ENCODE measurements at regions of chr12 and their contacts with region 1.

Region 1: GRCh38 chr12:93127582-93128331 is 198.7 kb upstream of the EEA1 start:
- DNase-seq: peak; percentile 79
- ATAC-seq: peak; percentile 92 to 96

Region 2: GRCh38 chr12:93025145-93025805 is 102.5 kb before region 1 on chr12:
- intact Hi-C with region 1: loop called in 1 of 2 experiments (anchors 2 kb)
- DNase-seq: no peak
- ATAC-seq: peak in 1 of 2 donors; percentile 58

Region 3: GRCh38 chr12:93080994-93081797 is 46.6 kb before region 1 on chr12:
- intact Hi-C with region 1: no loop called
- DNase-seq: no peak
- ATAC-seq: peak in 1 of 2 donors; percentile 12

Region 4: GRCh38 chr12:93336291-93336741 is 208.6 kb after region 1 on chr12:
- intact Hi-C with region 1: no loop called
- DNase-seq: no peak
- ATAC-seq: peak; percentile 37 to 71

Region 5: GRCh38 chr12:93378373-93379325 is 250.9 kb after region 1 on chr12:
- intact Hi-C with region 1: loop called in 1 of 2 experiments (anchors 5 kb)
- DNase-seq: peak; percentile 45
- ATAC-seq: peak; percentile 10 to 16